ENCODE measurements at regions of chr4 and their contacts with region 1.

Region 1: DNA sequence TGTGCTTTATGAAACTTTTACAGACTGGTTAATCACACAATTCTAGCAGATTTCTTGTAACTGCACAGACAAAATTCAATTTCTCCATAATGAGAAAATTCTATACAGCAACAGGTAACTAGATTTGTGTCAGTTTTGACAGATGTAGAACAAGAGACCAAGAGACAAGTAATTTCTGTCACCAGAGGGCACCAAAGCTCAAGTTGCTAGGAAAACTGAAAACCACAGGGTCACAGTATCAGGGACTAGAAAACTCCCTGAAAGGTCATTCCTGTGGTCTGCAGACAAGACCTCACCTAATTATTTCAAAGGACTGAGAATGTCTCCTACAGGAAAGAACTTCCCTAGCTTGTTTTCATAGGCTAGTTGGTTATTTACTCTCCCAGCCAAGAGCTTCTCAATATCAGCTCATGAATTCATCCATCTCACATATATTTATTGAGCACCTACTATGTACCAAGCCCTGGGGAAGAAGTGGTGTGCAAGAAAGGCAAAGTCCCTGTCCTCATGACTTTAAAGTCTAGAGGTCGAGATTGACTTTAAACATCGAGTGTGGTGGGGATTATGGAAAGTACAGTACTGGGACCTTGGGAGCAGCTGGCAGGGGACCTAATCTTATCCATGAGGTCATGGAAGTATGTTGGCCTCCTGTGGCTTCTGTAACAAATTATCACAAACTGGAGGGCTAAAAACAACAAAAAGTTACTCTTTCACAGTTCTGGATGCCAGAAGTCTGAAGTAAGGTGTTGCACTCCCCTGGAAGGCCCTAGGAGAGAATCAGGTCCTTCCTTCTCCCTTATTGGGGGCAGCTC is 47.8 kb upstream of the SETD7 start:
- DNase-seq: peak in 4 of 9 experiments; percentile 17 to 60 (median 42)
- ATAC-seq: peak; percentile 34
- H3K4me3 ChIP-seq: no peak overlapping the region
- H3K4me3 Mint-ChIP-seq: no peak overlapping the region
- H3K27ac ChIP-seq: no peak overlapping the region
- H3K27ac Mint-ChIP-seq: no peak overlapping the region
- H3K4me1 ChIP-seq: no peaks in the 10 kb centered on the region
- H3K4me1 Mint-ChIP-seq: peaks cover 19% of the 10 kb centered on the region
- H3K27me3 ChIP-seq: no peaks in the 10 kb centered on the region
- H3K27me3 Mint-ChIP-seq: peaks cover 24% of the 10 kb centered on the region
- CTCF ChIP-seq: peak; percentile 47

Region 2: GRCh38 chr4:139656614-139657486 is 53.1 kb after region 1 on chr4:
- CTCF ChIA-PET with region 1: interaction called, 71 read pairs
- POLR2A ChIA-PET with region 1: no interaction called
- intact Hi-C with region 1: no loop called
- DNase-seq: peak in 8 of 9 experiments; percentile 16 to 69 (median 48)
- ATAC-seq: peak; percentile 84
- H3K4me3 ChIP-seq: no peak overlapping the region
- H3K4me3 Mint-ChIP-seq: no peak overlapping the region
- H3K27ac ChIP-seq: no peak overlapping the region
- H3K27ac Mint-ChIP-seq: no peak overlapping the region
- H3K4me1 ChIP-seq: peaks cover 5% of the 10 kb centered on the region
- H3K4me1 Mint-ChIP-seq: peaks cover 15% of the 10 kb centered on the region
- H3K27me3 ChIP-seq: no peaks in the 10 kb centered on the region
- H3K27me3 Mint-ChIP-seq: peaks cover 2% of the 10 kb centered on the region
- CTCF ChIP-seq: peak; percentile 74

Region 3: GRCh38 chr4:139761461-139761860 is 157.7 kb after region 1 on chr4:
- CTCF ChIA-PET with region 1: no interaction called
- POLR2A ChIA-PET with region 1: no interaction called
- intact Hi-C with region 1: no loop called
- DNase-seq: no peak
- ATAC-seq: no peak
- H3K4me3 ChIP-seq: no peak overlapping the region
- H3K4me3 Mint-ChIP-seq: no peak overlapping the region
- H3K27ac ChIP-seq: no peak overlapping the region
- H3K27ac Mint-ChIP-seq: no peak overlapping the region
- H3K4me1 ChIP-seq: no peaks in the 10 kb centered on the region
- H3K4me1 Mint-ChIP-seq: peaks cover 3% of the 10 kb centered on the region
- H3K27me3 ChIP-seq: no peaks in the 10 kb centered on the region
- H3K27me3 Mint-ChIP-seq: no peaks in the 10 kb centered on the region
- CTCF ChIP-seq: no peak

Region 4: GRCh38 chr4:140609548-140610425 is 1006.0 kb after region 1 on chr4:
- CTCF ChIA-PET with region 1: no interaction called
- POLR2A ChIA-PET with region 1: no interaction called
- intact Hi-C with region 1: loop called in 1 of 2 experiments (anchors 10 kb)
- DNase-seq: peak in 2 of 9 experiments; percentile 13 to 48
- ATAC-seq: peak; percentile 46
- H3K4me3 ChIP-seq: no peak overlapping the region
- H3K4me3 Mint-ChIP-seq: no peak overlapping the region
- H3K27ac ChIP-seq: no peak overlapping the region
- H3K27ac Mint-ChIP-seq: no peak overlapping the region
- H3K4me1 ChIP-seq: no peaks in the 10 kb centered on the region
- H3K4me1 Mint-ChIP-seq: no peaks in the 10 kb centered on the region
- H3K27me3 ChIP-seq: peaks cover 0 to 4% of the 10 kb centered on the region in 2 experiments
- H3K27me3 Mint-ChIP-seq: peaks cover 10% of the 10 kb centered on the region
- CTCF ChIP-seq: peak; percentile 45

Region 5: GRCh38 chr4:140637836-140638235 is 1034.1 kb after region 1 on chr4:
- CTCF ChIA-PET with region 1: no interaction called
- POLR2A ChIA-PET with region 1: no interaction called
- intact Hi-C with region 1: loop called in 1 of 2 experiments (anchors 10 kb)
- DNase-seq: peak in 4 of 9 experiments; percentile 17 to 52 (median 26)
- ATAC-seq: no peak
- H3K4me3 ChIP-seq: no peak overlapping the region
- H3K4me3 Mint-ChIP-seq: no peak overlapping the region
- H3K27ac ChIP-seq: no peak overlapping the region
- H3K27ac Mint-ChIP-seq: no peak overlapping the region
- H3K4me1 ChIP-seq: no peaks in the 10 kb centered on the region
- H3K4me1 Mint-ChIP-seq: no peaks in the 10 kb centered on the region
- H3K27me3 ChIP-seq: no peaks in the 10 kb centered on the region
- H3K27me3 Mint-ChIP-seq: peaks cover 7% of the 10 kb centered on the region
- CTCF ChIP-seq: peak; percentile 45

Region 6: DNA sequence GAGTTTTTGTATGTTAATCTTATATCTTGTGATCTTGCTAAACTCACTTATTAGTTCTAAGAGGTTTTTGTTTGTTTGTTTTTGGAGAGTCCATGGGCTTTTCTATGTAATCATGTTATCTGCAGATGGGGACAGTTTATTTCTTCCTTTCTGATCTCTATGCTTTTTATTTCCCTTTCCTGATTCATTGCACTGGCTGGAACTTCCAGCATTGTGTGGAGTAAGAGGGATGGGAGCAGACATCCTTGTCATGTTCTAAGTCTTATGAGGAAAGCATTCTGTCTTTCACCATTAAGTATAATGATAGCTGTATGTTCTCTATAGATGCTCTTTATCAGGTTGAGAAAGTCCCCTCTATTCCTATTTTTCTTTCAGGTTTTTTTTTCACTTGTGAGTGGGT is 1243.0 kb after region 1 on chr4:
- CTCF ChIA-PET with region 1: no interaction called
- POLR2A ChIA-PET with region 1: no interaction called
- intact Hi-C with region 1: loop called in 1 of 2 experiments (anchors 5 kb)
- DNase-seq: no peak
- ATAC-seq: no peak
- H3K4me3 ChIP-seq: no peak overlapping the region
- H3K4me3 Mint-ChIP-seq: no peak overlapping the region
- H3K27ac ChIP-seq: no peak overlapping the region
- H3K27ac Mint-ChIP-seq: no peak overlapping the region
- H3K4me1 ChIP-seq: no peaks in the 10 kb centered on the region
- H3K4me1 Mint-ChIP-seq: no peaks in the 10 kb centered on the region
- H3K27me3 ChIP-seq: no peaks in the 10 kb centered on the region
- H3K27me3 Mint-ChIP-seq: peaks cover 6% of the 10 kb centered on the region
- CTCF ChIP-seq: no peak